B cell (primary cell): ENCODE measurements at regions of chr3 and their contacts with region 1.

Region 1: DNA sequence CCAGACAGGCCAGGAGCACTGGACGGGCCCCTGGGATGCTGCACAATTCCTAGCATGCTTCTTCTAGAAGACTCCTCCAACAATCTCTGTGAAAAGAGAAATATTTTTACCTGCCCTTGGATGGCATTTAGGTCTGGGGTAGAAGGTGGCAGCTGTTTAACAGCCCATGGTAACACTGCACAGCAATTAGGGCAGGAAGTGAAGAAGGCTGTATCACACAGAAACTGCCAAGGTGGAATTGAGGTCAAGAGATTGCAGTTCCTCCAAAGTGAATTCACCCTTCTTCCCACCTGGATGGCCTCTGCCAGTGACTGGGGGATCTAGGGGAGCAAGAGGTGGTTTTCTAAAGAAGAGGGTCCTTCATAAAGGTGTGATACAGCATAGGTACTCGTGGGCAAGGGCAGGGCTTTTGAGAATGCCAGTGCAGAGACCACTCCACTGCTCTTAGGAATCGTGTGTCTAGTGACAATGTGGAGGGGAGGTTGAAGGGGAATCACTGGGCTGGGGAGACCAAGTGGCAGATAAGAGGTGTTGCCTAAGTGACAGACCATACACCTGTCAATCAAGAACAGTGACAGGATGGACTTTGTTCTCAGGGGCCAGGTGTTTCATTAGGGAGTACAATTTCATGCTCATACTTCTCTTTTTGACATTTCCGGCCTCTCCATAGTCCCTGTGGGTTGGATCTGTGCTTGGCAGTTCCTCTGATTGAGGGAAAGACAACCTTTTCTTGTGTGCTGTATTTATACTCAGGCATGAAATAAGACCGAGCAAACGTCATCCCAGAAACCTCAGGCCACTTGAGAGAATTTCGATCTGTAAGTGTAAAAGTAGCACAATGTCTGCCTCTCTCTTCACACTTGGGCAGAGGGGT is 83.5 kb upstream of the BCL6 start:
- DNase-seq: no peak
- ATAC-seq: no peak
- H3K4me3 ChIP-seq: no peak overlapping the region
- H3K4me3 Mint-ChIP-seq: no peak overlapping the region
- H3K27ac ChIP-seq: no peak overlapping the region
- H3K27ac Mint-ChIP-seq: no peak overlapping the region
- H3K4me1 ChIP-seq: peaks cover 6 to 7% of the 10 kb centered on the region in 2 donors
- H3K4me1 Mint-ChIP-seq: peaks cover 7% of the 10 kb centered on the region
- H3K27me3 ChIP-seq: no peaks in the 10 kb centered on the region
- H3K27me3 Mint-ChIP-seq: no peaks in the 10 kb centered on the region
- CTCF ChIP-seq: no peak

Region 2: DNA sequence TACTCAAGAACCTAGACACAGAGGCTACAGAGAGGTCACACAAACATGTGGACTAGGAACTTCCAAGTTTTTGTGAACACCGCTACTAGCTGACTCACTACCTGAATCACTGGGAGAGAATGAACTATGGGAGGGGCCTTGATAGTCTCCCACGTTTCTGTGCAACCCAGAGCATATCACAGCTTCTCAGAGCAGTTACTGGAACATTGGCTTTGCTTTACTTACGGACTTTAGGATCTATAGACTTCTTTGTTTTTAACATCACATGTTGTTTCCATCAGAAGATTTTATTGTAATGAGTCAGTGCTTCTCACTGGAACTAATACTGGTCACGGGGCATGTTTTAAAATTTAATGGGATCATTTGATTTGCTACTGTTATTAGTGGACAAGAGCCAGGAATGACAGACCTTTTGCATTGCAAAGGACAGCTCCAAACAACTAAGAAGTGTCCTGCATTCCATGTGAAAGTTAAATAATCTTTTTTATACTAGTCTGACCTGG is 425.0 kb before region 1 on chr3:
- CTCF ChIA-PET with region 1: no interaction called
- POLR2A ChIA-PET with region 1: no interaction called
- intact Hi-C with region 1: no loop called
- DNase-seq: no peak
- ATAC-seq: no peak
- H3K4me3 ChIP-seq: no peak overlapping the region
- H3K4me3 Mint-ChIP-seq: no peak overlapping the region
- H3K27ac ChIP-seq: no peak overlapping the region
- H3K27ac Mint-ChIP-seq: no peak overlapping the region
- H3K4me1 ChIP-seq: no peaks in the 10 kb centered on the region
- H3K4me1 Mint-ChIP-seq: no peaks in the 10 kb centered on the region
- H3K27me3 ChIP-seq: peaks cover 0 to 16% (median 3%) of the 10 kb centered on the region in 4 experiments
- H3K27me3 Mint-ChIP-seq: peaks cover 36% of the 10 kb centered on the region
- CTCF ChIP-seq: no peak

Region 3: DNA sequence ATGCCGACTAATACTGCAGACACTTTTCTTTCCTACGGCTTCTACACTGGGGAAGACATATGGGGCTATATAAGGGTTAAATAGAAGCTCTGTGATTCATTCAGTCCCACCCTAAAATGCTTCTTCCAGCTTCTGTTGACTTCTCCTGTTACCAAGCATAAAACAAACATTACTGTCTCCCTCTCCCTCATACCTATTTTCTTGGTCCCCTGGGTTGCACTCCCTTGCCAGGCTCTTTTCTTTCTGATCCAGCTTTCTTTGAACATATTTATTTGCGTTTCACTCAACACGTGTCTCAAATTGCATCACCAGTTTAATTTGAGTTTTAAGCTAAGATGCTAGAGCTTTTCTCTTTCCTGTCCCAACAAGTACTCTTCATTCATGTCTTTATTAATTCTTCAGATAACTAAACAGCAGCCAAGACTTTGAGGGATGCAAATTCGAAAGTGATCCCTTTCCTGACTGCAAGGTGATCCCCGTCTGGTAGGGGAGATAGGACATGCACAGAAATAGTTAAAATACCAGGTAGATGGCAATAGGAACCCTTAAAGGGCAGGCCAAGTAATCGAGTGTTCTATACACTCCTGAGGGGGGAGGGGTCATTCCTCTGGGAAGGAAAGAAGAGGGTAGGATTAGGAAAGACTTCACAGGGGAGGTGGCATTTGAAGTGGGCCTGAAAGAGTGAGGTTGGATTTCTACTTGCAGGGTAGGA is 115.0 kb after region 1 on chr3:
- CTCF ChIA-PET with region 1: no interaction called
- POLR2A ChIA-PET with region 1: interaction called, 11 read pairs
- intact Hi-C with region 1: no loop called
- DNase-seq: no peak
- ATAC-seq: no peak
- H3K4me3 ChIP-seq: no peak overlapping the region
- H3K4me3 Mint-ChIP-seq: no peak overlapping the region
- H3K27ac ChIP-seq: no peak overlapping the region
- H3K27ac Mint-ChIP-seq: no peak overlapping the region
- H3K4me1 ChIP-seq: peaks cover 45 to 54% of the 10 kb centered on the region in 2 donors
- H3K4me1 Mint-ChIP-seq: peaks cover 14% of the 10 kb centered on the region
- H3K27me3 ChIP-seq: peaks cover 0 to 5% (median 0%) of the 10 kb centered on the region in 4 experiments
- H3K27me3 Mint-ChIP-seq: peaks cover 25% of the 10 kb centered on the region
- CTCF ChIP-seq: no peak